Naive thymus-derived CD4-positive, alpha-beta T cell (primary cell): ENCODE measurements at regions of chr1 and their contacts with region 1.

Region 1: GRCh38 chr1:108057541-108057940 is 92.6 kb upstream of the VAV3 start:
- DNase-seq: no peak
- ATAC-seq: no peak
- H3K4me3 ChIP-seq: no peak overlapping the region
- H3K4me3 Mint-ChIP-seq: no peak overlapping the region
- H3K27ac ChIP-seq: no peak overlapping the region
- H3K27ac Mint-ChIP-seq: no peak overlapping the region
- H3K4me1 ChIP-seq: no peaks in the 10 kb centered on the region
- H3K4me1 Mint-ChIP-seq: peaks cover 0 to 4% (median 0%) of the 10 kb centered on the region in 7 donors
- H3K27me3 ChIP-seq: no peaks in the 10 kb centered on the region
- H3K27me3 Mint-ChIP-seq: no peaks in the 10 kb centered on the region

Region 2: GRCh38 chr1:107936498-107937481 is 120.8 kb before region 1 on chr1:
- CTCF ChIA-PET with region 1: no interaction called
- POLR2A ChIA-PET with region 1: no interaction called
- intact Hi-C with region 1: no loop called
- DNase-seq: peak in 1 of 9 donors; percentile 43
- ATAC-seq: peak; percentile 82
- H3K4me3 ChIP-seq: no peak overlapping the region
- H3K4me3 Mint-ChIP-seq: peak overlapping the region in 2 of 10 donors; percentile 23 to 33
- H3K27ac ChIP-seq: no peak overlapping the region
- H3K27ac Mint-ChIP-seq: peak overlapping the region in 3 of 9 donors; percentile 7 to 28 (median 26)
- H3K4me1 ChIP-seq: peaks cover 0 to 14% of the 10 kb centered on the region in 2 donors
- H3K4me1 Mint-ChIP-seq: peaks cover 24 to 68% (median 38%) of the 10 kb centered on the region in 7 donors
- H3K27me3 ChIP-seq: no peaks in the 10 kb centered on the region
- H3K27me3 Mint-ChIP-seq: no peaks in the 10 kb centered on the region

Region 3: GRCh38 chr1:108000620-108001111 is 56.9 kb before region 1 on chr1:
- CTCF ChIA-PET with region 1: no interaction called
- POLR2A ChIA-PET with region 1: no interaction called
- intact Hi-C with region 1: no loop called
- DNase-seq: no peak
- ATAC-seq: no peak
- H3K4me3 ChIP-seq: no peak overlapping the region
- H3K4me3 Mint-ChIP-seq: no peak overlapping the region
- H3K27ac ChIP-seq: no peak overlapping the region
- H3K27ac Mint-ChIP-seq: peak overlapping the region in 1 of 9 donors; percentile 28
- H3K4me1 ChIP-seq: no peaks in the 10 kb centered on the region
- H3K4me1 Mint-ChIP-seq: no peaks in the 10 kb centered on the region
- H3K27me3 ChIP-seq: no peaks in the 10 kb centered on the region
- H3K27me3 Mint-ChIP-seq: no peaks in the 10 kb centered on the region

Region 4: DNA sequence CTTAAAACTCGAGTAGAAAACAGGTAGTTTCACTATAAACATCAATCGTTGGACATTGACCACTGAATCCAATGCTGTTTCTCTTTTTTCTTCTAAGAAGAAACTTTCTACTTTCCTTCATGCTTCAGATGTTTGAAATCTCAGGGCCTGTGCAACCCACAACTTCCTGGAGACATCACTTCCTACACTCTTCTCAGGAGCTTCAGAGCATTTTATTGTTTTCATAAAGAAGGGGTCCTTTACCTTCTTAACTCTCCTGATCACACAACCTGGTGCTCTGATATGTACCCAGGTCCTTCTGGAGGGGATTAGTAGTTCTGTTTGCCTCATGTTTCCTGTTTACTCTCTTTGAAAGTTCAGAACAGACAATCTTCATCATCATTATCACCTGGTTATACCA is 20.4 kb after region 1 on chr1:
- CTCF ChIA-PET with region 1: no interaction called
- POLR2A ChIA-PET with region 1: no interaction called
- intact Hi-C with region 1: no loop called
- DNase-seq: peak in 7 of 9 donors; percentile 19 to 63 (median 57)
- ATAC-seq: peak; percentile 76
- H3K4me3 ChIP-seq: peak overlapping the region; percentile 2
- H3K4me3 Mint-ChIP-seq: peak overlapping the region; percentile 27 to 76 (median 72)
- H3K27ac ChIP-seq: peak overlapping the region; percentile 68
- H3K27ac Mint-ChIP-seq: peak overlapping the region; percentile 81 to 94 (median 91)
- H3K4me1 ChIP-seq: peaks cover 56 to 66% of the 10 kb centered on the region in 2 donors
- H3K4me1 Mint-ChIP-seq: peaks cover 51 to 80% (median 76%) of the 10 kb centered on the region in 7 donors
- H3K27me3 ChIP-seq: no peaks in the 10 kb centered on the region
- H3K27me3 Mint-ChIP-seq: no peaks in the 10 kb centered on the region

Region 5: DNA sequence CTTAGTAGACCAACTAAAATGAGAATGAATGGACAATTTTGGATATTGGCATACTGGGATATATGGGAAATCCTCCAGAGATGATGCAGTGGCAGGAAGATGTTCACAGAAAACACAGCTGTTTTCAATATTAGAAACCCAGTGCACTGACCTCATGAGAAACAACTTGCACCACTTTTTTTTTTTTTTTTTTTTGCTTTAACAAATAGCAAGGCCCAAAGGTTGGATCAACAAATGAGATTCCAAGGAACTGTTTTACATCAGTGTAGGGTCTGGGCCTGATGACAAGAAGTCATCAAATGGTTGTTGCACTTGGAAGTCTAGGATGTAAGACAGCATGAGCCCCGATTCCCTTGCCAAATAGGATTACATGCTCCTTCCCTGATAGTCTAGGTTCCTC is 31.9 kb after region 1 on chr1:
- CTCF ChIA-PET with region 1: no interaction called
- POLR2A ChIA-PET with region 1: no interaction called
- intact Hi-C with region 1: loop called in 1 of 2 experiments (anchors 5 kb)
- DNase-seq: no peak
- ATAC-seq: no peak
- H3K4me3 ChIP-seq: no peak overlapping the region
- H3K4me3 Mint-ChIP-seq: no peak overlapping the region
- H3K27ac ChIP-seq: no peak overlapping the region
- H3K27ac Mint-ChIP-seq: no peak overlapping the region
- H3K4me1 ChIP-seq: no peaks in the 10 kb centered on the region
- H3K4me1 Mint-ChIP-seq: peaks cover 0 to 16% (median 5%) of the 10 kb centered on the region in 7 donors
- H3K27me3 ChIP-seq: no peaks in the 10 kb centered on the region
- H3K27me3 Mint-ChIP-seq: no peaks in the 10 kb centered on the region

Region 6: DNA sequence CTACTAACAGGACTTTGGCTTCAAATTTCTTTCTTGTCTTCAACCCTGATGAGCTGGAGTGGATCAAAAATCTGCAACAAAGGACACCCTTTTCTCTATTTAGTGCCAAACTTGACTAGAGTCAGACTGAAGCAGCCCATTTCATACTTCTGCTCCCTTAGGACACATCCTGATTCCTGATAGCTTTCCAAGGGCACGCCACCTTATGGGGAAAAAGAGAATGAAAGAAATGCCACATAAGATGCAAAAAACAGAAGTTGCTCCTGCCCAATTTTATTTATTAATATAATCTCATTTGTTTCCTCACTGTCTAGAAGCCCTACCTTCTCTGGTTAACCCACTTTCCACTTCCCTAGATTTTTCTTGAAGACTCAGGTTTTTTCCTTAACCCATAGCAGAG is 259.0 kb after region 1 on chr1:
- CTCF ChIA-PET with region 1: no interaction called
- POLR2A ChIA-PET with region 1: no interaction called
- intact Hi-C with region 1: no loop called
- DNase-seq: no peak
- ATAC-seq: no peak
- H3K4me3 ChIP-seq: no peak overlapping the region
- H3K4me3 Mint-ChIP-seq: no peak overlapping the region
- H3K27ac ChIP-seq: no peak overlapping the region
- H3K27ac Mint-ChIP-seq: no peak overlapping the region
- H3K4me1 ChIP-seq: no peaks in the 10 kb centered on the region
- H3K4me1 Mint-ChIP-seq: no peaks in the 10 kb centered on the region
- H3K27me3 ChIP-seq: no peaks in the 10 kb centered on the region
- H3K27me3 Mint-ChIP-seq: peaks cover 21 to 39% (median 30%) of the 10 kb centered on the region in 5 donors